Activated CD4-positive, alpha-beta T cell treated with anti-CD3 and anti-CD28 coated beads, Interleukin-2, amount 10 ng/mL, durations not matched to agents 7 days and 5 days (primary cell): ENCODE measurements at regions of chr12 and their contacts with region 1.

Region 1: DNA sequence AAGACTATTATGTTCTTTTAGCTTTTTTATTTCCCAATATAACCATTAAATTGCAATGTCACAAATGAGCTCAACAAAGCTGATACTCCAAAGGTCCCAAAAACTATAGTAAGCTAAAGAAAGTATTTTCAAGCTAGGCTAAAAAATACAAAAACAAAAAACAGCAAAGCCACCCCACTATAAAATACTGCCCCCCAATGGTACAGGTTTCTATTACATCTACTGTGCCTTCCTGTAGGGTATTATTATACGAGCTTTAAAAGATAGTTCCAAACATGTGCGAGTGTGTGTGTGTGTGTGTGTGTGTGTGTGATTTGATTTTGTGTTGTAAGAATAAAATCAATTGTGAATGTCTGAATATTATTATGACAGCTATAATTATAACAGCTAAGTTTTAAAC is 1.1 kb downstream of the IFNG start:
- DNase-seq: peak; percentile 44
- H3K4me3 Mint-ChIP-seq: no peak overlapping the region
- H3K27ac Mint-ChIP-seq: no peak overlapping the region
- H3K4me1 Mint-ChIP-seq: peaks cover 15% of the 10 kb centered on the region
- H3K27me3 Mint-ChIP-seq: no peaks in the 10 kb centered on the region

Region 2: GRCh38 chr12:68040450-68041075 is 117.9 kb before region 1 on chr12:
- CTCF ChIA-PET with region 1: interaction called, 19 read pairs
- POLR2A ChIA-PET with region 1: no interaction called
- DNase-seq: peak; percentile 69
- H3K4me3 Mint-ChIP-seq: no peak overlapping the region
- H3K27ac Mint-ChIP-seq: no peak overlapping the region
- H3K4me1 Mint-ChIP-seq: peaks cover 23% of the 10 kb centered on the region
- H3K27me3 Mint-ChIP-seq: no peaks in the 10 kb centered on the region

Region 3: DNA sequence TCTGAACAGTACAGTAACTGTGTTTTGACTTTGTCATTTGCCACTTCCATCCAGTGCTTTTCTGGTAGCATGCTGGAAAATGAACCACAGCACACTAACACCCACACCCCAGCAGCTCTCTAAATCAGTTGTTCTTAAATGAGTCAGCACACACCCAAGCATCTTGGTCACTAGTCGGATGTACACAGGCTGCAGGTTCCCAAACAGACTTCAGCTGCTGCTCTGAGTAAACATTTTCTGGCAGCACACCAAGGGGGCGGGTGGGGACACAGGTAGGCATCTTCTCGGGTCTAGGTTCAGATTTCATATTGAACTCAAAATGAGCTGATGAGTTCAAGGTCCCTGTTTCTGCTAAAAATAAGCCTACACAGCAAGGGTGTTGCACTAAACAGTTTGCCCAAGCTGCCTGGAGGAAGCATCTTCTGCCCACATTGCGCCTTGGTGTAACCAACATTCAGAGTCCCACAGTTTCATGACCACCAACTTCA is 38.7 kb before region 1 on chr12:
- CTCF ChIA-PET with region 1: interaction called, 17 read pairs
- POLR2A ChIA-PET with region 1: interaction called, 3 read pairs
- DNase-seq: peak; percentile 57
- H3K4me3 Mint-ChIP-seq: peak overlapping the region; percentile 4
- H3K27ac Mint-ChIP-seq: peak overlapping the region; percentile 81
- H3K4me1 Mint-ChIP-seq: peaks cover 25% of the 10 kb centered on the region
- H3K27me3 Mint-ChIP-seq: no peaks in the 10 kb centered on the region

Region 4: DNA sequence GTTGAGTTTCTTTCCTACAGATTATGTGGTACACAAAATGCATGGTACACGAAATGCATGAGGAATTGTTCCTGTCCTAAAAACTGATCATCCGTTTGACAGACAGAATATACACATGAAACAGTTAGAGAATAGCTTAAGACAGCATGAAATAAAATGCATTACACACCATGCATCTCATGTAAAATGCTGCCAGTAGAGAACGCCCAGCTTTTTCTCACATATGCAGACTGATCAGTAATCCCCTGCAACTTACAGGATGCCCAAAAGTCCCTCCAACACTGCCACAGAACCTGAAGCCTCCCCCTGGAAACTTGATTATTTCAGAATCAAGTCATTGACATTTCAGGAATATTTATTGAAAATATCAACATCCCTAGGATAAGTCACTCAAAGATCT is 22.9 kb before region 1 on chr12:
- CTCF ChIA-PET with region 1: interaction called, 15 read pairs
- POLR2A ChIA-PET with region 1: no interaction called
- DNase-seq: no peak
- H3K4me3 Mint-ChIP-seq: no peak overlapping the region
- H3K27ac Mint-ChIP-seq: no peak overlapping the region
- H3K4me1 Mint-ChIP-seq: peaks cover 48% of the 10 kb centered on the region
- H3K27me3 Mint-ChIP-seq: no peaks in the 10 kb centered on the region

Region 5: GRCh38 chr12:68140556-68140955 is 17.9 kb before region 1 on chr12:
- CTCF ChIA-PET with region 1: interaction called, 18 read pairs
- POLR2A ChIA-PET with region 1: interaction called, 6 read pairs
- DNase-seq: no peak
- H3K4me3 Mint-ChIP-seq: no peak overlapping the region
- H3K27ac Mint-ChIP-seq: no peak overlapping the region
- H3K4me1 Mint-ChIP-seq: peaks cover 44% of the 10 kb centered on the region
- H3K27me3 Mint-ChIP-seq: no peaks in the 10 kb centered on the region

Region 6: DNA sequence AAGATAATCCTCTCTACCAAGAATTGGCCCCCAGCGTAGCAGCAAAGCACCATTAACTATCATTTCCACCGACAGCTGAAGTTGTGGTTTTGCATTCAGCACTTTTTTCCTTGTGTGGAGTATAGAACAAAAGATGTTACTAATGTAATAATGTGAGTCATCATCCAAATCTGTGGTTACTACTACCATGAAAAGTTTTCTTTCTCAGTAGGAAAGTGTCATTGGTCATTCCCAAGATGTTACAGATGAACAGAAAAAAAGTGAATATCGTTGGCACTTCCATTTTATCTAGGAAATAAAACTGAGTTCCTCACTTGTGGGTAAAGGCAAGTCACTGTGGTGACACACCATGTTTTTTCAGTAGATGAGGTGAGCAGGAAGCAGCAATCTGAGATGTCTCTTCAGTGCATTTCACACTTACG is 31.4 kb after region 1 on chr12:
- CTCF ChIA-PET with region 1: interaction called, 11 read pairs
- POLR2A ChIA-PET with region 1: no interaction called
- DNase-seq: peak; percentile 42
- H3K4me3 Mint-ChIP-seq: peak overlapping the region; percentile 21
- H3K27ac Mint-ChIP-seq: peak overlapping the region; percentile 65
- H3K4me1 Mint-ChIP-seq: peaks cover 22% of the 10 kb centered on the region
- H3K27me3 Mint-ChIP-seq: peaks cover 12% of the 10 kb centered on the region